ENCODE measurements at regions of chr15 and their contacts with region 1.

Region 1: GRCh38 chr15:92521624-92522008 is 127.9 kb downstream of the ST8SIA2 start:
- DNase-seq: peak; percentile 35 to 95 (median 79)

Region 2: GRCh38 chr15:92625251-92625980 is 103.8 kb after region 1 on chr15:
- intact Hi-C with region 1: loop called (anchors 10 kb)
- DNase-seq: no peak

Region 3: DNA sequence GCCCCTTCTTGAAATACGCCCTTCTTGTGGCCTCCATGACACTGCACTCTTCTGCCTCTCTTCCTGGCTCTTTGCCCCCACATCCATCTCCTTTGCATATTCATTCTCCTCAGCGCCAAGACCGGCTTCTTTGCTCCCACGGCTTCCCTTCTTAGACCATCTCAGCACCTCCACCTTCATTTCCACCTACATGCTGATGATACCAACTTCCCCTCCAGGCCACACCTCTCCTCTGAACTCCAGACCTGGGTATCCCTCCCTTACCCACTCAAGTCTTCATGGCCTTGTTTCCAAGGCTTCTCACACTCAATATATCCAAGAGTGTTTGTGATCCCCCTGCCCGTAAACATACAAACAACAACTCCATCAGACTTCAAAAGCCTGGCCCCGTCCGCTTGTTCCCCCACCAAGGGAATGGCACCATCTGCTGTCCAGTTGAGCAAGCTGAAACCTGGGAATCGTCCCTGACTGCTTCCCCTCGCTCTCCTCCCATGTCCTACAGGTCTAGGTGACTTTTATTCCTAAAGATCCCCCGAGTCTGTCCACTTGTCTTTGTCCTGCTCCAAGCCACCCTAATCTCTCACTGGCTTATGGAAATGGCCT is 161.7 kb after region 1 on chr15:
- intact Hi-C with region 1: loop called (anchors 2 kb)
- DNase-seq: peak in 7 of 10 donors; percentile 34 to 94 (median 65)